Activated CD4-positive, alpha-beta T cell treated with anti-CD3 and anti-CD28 coated beads, Interleukin-2, amount 10 ng/mL, durations not matched to agents 24 days and 14 days (primary cell): ENCODE measurements at regions of chr17 and their contacts with region 1.

Region 1: DNA sequence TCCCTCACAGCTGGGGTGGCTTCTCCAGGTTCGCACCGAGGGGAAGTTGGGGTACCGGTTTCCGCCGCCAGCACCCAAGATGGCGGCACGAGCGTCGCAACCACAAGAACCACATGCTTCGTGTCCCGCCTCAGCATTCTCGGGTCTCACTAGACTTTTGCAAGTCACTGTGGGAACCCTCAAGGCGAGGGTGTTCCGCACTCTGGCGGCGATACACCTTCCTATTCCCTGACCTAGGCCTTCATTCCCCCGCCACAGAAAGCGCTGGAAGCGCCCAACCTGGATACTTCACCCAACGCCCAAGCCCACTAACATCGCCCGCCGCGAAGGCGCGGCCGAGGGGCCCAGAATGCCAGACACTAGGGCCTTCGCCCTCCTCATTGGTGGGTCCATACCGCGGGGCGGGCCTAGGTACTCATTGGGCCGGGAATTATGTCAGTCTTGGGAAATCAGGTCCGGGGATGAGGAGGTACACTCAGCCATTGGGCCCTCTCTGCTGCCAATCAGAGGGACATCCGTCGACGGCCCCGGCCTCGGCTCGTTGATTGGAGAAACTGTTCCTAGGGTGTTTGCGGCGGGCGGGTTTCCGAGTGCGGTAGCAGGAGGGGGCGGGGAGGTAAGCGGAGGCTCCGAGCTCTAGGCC is at the start of gene NFE2L1:
- DNase-seq: peak; percentile 99
- H3K4me3 Mint-ChIP-seq: peak within 1 kb of the TSS; percentile 96
- H3K27ac Mint-ChIP-seq: peak within 1 kb of the TSS; percentile 96
- H3K4me1 Mint-ChIP-seq: peaks cover 43% of the 10 kb centered on the region
- H3K27me3 Mint-ChIP-seq: no peaks in the 10 kb centered on the region
- total RNA-seq, gene NFE2L1: 85.2 and 93.1 TPM in 2 replicates

Region 2: DNA sequence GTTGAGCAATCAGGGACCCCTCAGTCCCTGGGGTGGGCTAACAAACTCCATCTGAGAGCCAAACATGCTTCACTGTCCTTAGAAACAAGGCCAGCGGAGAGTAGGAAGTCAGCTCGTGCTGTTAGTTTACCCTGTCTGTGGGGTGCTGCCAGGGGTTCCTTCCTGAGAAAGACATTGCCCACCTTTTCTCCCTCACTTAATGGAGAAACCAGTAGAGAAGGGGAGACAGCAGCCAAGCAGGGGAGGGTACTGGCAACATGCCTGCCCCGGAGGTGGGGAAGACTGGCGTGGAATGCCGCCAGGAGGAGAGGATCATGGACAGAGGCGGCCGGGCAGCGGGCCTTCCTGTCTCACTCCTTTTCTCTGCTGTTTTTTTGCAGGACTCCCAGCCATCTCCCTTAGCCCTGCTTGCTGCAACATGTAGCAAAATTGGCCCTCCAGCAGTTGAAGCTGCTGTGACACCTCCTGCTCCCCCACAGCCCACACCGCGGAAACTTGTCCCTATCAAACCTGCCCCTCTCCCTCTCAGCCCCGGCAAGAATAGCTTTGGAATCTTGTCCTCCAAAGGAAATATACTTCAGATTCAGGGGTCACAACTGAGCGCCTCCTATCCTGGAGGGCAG is 132.0 kb before region 1 on chr17:
- intact Hi-C with region 1: no loop called
- DNase-seq: no peak
- H3K4me3 Mint-ChIP-seq: no peak overlapping the region
- H3K27ac Mint-ChIP-seq: no peak overlapping the region
- H3K4me1 Mint-ChIP-seq: peaks cover 3% of the 10 kb centered on the region
- H3K27me3 Mint-ChIP-seq: no peaks in the 10 kb centered on the region

Region 3: GRCh38 chr17:47949136-47949759 is 98.6 kb before region 1 on chr17:
- intact Hi-C with region 1: no loop called
- DNase-seq: peak; percentile 96
- H3K4me3 Mint-ChIP-seq: peak overlapping the region; percentile 71
- H3K27ac Mint-ChIP-seq: peak overlapping the region; percentile 78
- H3K4me1 Mint-ChIP-seq: peaks cover 33% of the 10 kb centered on the region
- H3K27me3 Mint-ChIP-seq: no peaks in the 10 kb centered on the region

Region 4: DNA sequence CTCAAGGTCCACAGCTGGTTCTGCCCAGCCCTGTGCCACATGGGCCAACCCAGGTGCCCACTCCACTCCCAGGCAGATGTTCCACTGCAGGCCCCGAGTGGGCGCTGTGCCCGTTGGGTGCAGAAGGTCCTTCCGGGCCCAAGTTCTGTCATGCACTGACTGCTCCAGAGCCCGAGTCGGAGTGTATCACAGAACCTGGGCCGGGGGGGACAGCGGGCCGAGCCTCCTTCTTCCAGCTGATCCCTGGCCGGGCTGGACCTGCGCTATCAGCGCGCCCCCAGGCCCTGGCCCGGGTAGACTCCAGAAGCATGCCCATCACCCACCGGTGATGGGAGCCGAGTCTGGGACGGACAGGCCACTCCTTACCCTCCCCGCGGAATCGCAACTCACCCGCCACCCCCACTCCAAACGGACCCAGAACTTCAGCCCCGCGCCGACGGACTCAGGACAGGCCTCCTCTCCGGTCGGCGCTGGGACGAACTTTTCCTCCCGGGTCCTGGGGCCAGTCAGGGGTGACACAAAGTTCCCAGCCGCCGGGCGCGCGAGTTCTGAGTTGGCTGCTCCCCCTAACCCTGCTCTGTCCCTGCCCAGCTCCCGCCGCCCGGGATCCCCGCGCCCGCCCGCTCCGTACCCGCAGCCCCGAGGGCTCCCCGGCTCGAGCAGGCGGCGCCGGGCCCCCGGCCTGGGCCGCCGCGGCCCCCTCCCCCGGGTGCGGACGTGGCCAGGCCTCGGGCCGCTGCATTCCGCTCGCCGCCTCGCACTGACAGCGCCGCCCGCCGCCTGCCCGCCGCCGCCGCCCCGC is 10.6 kb before region 1 on chr17 and contains the start of gene COPZ2:
- intact Hi-C with region 1: loop called (anchors 1 kb)
- DNase-seq: peak; percentile 89
- H3K4me3 Mint-ChIP-seq: peak within 1 kb of the TSS; percentile 86
- H3K27ac Mint-ChIP-seq: peak within 1 kb of the TSS; percentile 62
- H3K4me1 Mint-ChIP-seq: peaks cover 12% of the 10 kb centered on the region
- H3K27me3 Mint-ChIP-seq: peaks cover 39% of the 10 kb centered on the region
- total RNA-seq, gene COPZ2: 4.4 and 4.5 TPM in 2 replicates

Region 5: GRCh38 chr17:48101012-48101720 is 53.3 kb after region 1 on chr17 and contains the start of gene CBX1:
- intact Hi-C with region 1: loop called (anchors 2 kb)
- DNase-seq: peak; percentile 98
- H3K4me3 Mint-ChIP-seq: peak within 1 kb of the TSS; percentile 99
- H3K27ac Mint-ChIP-seq: peak within 1 kb of the TSS; percentile 89
- H3K4me1 Mint-ChIP-seq: peaks cover 28% of the 10 kb centered on the region
- H3K27me3 Mint-ChIP-seq: no peaks in the 10 kb centered on the region
- total RNA-seq, gene CBX1: 61.3 and 64.6 TPM in 2 replicates